Dorsolateral prefrontal cortex (tissue), 120 donors: ENCODE measurements at regions of chr20 and their contacts with region 1.

Region 1: DNA sequence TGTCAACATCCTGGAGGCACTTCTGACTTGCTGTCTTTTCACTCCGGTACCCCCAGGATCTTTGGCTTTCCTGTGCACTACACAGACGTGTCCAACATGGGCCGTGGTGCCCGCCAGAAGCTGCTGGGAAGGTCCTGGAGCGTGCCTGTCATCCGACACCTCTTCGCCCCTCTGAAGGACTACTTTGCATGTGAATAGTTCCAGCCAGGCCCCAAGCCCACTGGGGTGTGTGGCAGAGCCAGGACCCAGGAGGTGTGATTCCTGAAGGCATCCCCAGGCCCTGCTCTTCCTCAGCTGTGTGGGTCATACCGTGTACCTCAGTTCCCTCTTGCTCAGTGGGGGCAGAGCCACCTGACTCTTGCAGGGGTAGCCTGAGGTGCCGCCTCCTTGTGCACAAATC is 12.0 kb upstream of the MAPRE1 start:
- DNase-seq: no peak
- H3K4me3 ChIP-seq: no peak overlapping the region
- H3K27ac ChIP-seq: no peak overlapping the region
- H3K27me3 ChIP-seq: no peaks in the 10 kb centered on the region
- CTCF ChIP-seq: no peak

Region 2: DNA sequence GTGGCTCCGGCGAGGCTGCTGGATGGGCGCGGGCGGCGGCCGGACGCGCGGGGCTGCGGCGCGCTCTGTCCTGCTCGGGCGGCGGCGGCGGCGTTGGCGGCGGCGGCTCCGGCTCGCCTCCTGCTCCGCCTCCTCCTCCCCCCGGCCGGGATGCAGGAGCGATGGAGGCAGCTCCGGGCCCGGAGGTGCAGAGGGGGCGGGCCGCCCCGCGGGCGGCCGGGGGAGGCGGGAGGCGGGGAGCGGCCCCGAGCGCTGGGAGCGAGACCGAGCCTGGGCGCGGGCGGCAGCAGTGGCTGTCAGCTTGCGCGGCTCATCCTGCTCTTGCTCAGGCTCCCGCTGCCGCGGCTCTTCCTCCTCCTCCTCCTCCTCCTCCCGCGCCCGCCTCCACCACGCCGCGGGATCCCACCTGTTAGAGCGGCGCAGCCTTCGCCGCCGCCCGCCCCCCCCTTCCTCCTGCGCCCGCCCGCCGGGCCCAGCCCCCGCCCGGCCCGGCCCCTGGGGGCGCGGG is 222.6 kb before region 1 on chr20 and contains the start of gene NOL4L:
- intact Hi-C with region 1: no loop called
- DNase-seq: peak in 4 of 10 donors; percentile 32 to 69 (median 60)
- H3K4me3 ChIP-seq: peak within 1 kb of the TSS; percentile 54 to 89 (median 76)
- H3K27ac ChIP-seq: peak within 1 kb of the TSS in 57 of 59 donors; percentile 51 to 96 (median 86)
- H3K27me3 ChIP-seq: no peaks in the 10 kb centered on the region
- CTCF ChIP-seq: no peak
- total RNA-seq, gene NOL4L: 29.4 to 56.2 (median 42.8) TPM

Region 3: DNA sequence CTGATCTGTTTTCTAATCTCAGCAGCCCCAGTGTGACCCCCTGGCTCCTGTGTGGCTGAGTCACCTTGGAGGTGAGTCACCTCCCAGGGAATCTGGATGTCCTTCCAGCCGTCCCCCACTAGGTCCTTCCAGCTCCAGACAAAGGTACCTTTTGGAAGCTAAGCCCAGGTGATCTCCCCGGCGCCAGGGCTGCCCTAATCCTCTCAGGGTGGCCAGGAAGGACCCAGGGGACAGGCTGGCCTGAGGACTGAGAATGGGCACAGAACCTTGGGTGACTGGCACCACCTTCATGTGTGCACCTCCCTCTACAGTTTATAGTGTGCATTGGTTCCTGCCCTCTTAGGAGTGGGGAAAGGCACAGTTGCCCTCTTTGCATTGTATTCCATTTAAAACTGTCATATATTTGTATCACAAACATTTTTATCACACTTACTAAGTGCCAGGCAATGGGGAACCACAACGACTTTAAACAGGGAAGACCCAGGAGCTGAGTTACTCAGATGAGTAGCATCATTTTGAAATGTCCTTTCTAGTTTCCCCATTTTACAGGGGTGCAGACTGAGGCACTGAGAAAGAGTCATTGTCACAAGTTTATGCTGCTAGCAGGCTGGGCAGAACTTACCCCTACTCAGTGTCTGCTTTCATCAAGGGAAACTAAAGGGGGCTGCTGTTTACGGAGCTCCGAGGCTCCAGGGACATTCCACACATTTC is 269.1 kb after region 1 on chr20:
- intact Hi-C with region 1: loop called in 1 of 2 experiments (anchors 10 kb)
- DNase-seq: no peak
- H3K4me3 ChIP-seq: no peak overlapping the region
- H3K27ac ChIP-seq: no peak overlapping the region
- H3K27me3 ChIP-seq: peaks cover 0 to 6% (median 0%) of the 10 kb centered on the region in 45 donors
- CTCF ChIP-seq: peak in 43 of 56 donors; percentile 11 to 71 (median 42)